Right ventricle myocardium inferior (tissue), 1 donor: ENCODE measurements at regions of chr5 and their contacts with region 1.

Region 1: GRCh38 chr5:97162045-97162444 is 19.6 kb upstream of the LIX1 start:
- DNase-seq: no peak
- ATAC-seq: peak; percentile 56

Region 2: DNA sequence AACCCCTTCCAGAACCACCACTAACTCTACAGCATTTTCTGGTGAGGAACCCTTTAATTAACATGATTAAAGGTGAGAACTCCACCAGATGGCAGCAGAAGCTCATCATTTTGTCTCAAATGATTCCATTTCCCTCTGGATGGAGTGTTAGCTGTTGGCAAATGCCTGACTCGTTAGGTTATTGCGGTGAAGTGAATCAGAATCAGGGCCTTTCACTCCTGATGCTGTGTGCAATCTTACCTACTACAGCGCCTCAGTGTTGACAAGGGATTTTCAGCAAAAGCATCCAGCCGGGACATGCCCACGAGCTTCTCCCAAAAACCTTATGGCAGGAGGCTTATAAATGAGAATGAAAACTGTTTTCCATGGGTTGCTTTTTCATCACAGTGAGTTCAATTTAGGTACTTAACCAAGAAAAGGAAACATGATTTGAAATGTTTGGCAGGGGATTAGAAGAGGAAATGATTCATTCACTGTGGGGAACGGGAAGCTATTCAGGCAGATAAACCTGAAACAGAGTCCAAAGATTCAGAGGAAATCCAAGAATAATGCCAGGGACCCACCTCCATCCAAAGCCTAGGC is 547.8 kb before region 1 on chr5:
- intact Hi-C with region 1: loop called (anchors 5 kb)
- DNase-seq: no peak
- ATAC-seq: peak; percentile 79

Region 3: DNA sequence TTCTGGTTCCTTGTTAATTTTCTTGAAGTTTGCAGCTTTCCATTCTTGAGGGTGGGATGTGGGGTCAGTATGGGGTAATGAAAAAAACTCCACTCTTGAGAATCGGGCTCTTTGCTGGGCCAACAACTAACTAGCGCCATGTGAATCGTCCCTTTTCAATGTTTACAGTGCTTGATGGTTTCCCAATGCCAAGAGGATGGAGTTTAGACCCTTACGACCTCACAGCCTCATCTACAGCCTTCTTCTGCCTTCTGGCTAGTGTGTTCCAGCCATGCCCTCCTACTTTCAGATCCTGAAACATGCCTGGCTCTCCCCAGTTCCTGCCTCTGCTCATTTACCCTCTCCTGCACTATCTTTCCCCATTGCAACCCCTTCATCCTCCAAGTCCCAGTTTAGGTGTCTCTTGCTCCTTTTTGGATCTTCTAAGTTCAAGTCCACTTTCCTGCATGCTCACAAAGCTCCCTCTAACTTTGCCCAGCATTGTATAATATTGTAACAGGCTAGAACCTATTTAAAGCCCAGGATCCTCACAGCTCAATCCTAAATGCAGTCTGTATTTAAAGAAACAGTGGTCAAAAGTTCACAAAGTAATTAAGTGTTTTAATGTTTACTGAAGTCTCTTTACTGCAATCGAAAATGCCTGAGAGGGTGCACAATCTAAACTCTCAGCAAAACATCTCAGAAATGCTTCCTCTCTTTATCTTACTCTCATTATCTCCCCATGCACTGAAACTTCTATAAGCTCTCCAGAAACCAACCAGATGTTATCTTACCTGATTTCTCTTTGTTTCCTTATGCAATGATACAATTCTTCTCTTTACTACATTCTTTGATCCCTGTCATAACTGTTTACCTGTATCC is 520.4 kb before region 1 on chr5:
- intact Hi-C with region 1: no loop called
- DNase-seq: no peak
- ATAC-seq: no peak

Region 4: DNA sequence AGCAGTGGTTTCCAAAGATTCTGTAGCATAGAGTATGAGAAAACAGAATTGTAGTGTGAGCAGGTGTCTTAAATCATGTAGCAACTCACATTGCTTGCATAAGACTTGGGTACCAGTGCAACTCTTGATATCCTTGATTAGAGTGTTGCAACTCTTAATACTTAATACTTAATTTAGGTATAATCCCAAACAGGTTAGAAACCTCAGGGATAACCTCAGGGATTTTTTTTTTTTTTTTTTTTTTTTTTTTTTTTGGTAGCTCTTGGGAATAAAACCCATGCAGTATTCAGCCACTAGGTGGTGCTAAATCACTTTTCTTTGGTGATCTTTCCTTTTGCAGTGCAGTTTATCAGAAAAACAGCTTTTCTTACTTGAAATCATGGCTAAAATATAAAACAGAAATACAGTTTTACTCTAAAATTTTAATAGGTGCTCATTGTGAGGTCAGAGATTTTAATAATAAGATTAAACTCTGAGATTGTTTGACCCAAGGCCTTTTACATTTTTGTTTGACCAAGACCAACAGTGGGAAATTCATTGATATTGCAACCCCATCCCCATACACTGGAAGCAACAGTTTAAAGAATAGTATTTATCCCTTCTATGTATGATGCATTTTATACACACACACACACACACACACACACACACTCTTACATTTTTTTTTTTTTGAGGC is 409.6 kb before region 1 on chr5:
- intact Hi-C with region 1: loop called (anchors 5 kb)
- DNase-seq: no peak
- ATAC-seq: no peak

Region 5: GRCh38 chr5:96868603-96869371 is 293.3 kb before region 1 on chr5:
- intact Hi-C with region 1: loop called (anchors 2 kb)
- DNase-seq: no peak
- ATAC-seq: peak; percentile 79

Region 6: DNA sequence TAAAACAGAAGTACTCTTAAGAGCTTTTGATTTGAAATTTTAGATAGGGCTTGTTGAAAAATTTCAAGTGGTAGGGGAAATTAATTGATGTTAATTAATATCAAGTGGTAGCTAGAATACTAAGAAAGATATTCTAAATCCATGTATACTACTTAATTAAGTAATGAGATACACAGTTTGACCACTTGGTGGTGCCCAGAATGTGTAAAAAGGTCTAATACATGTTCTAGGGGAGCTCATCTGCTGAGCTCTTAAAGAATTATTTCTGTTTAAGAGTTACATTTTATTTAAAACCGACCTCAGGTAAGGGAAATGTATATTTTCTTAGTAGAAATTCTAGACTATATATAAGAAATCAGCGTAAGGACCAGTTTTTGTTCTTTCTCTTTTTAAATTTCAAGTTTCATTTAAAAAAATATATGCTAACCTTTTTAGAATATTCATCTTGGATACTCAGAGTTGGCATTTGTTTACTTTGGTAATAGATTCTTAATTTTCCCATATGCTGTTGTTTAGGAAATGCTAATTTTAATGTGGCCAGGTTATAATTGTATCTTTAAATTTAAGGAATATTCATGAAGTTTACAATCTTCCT is 164.7 kb before region 1 on chr5:
- intact Hi-C with region 1: loop called (anchors 10 kb)
- DNase-seq: no peak
- ATAC-seq: peak; percentile 59

Region 7: GRCh38 chr5:97044052-97044451 is 118.0 kb before region 1 on chr5:
- intact Hi-C with region 1: loop called (anchors 5 kb)
- DNase-seq: no peak
- ATAC-seq: peak; percentile 60

Region 8: DNA sequence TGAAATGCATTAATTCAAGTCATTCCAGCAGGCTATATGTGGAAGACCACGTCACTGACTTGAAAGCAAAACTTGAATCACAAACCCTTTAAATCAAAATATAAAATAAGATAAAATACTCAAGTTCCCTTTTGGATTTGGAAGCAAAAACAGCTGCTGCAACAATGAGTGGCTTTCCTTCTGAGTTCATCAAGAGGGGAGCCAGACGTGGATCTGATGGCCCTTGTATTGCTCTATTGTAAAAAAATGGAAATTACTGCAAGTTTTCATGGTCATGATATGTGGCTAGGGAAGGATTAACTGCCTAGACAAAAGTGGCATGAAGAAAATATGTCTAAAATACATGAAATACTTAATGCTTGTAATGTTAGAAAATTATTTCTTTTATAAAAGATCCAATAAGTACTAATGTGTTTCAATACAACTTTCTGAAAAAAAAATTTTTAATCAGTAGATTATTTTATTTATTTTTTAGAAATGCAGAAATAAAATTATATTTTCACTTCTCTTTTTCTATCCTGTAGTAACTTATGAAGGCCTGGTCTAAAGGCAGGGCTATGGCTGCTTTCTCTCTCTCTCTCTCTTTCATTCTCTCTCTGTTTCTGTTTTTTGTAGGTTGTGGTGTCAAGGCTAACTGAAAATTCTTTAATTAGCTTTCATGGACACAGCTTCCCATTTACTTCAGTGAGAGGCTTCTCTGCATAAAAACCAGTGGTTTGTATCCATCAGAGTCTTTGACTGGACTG is 43.6 kb before region 1 on chr5:
- intact Hi-C with region 1: loop called (anchors 1 kb)
- DNase-seq: no peak
- ATAC-seq: no peak